Endothelial cell of umbilical vein (primary cell): ENCODE measurements at regions of chr2 and their contacts with region 1.

Region 1: DNA sequence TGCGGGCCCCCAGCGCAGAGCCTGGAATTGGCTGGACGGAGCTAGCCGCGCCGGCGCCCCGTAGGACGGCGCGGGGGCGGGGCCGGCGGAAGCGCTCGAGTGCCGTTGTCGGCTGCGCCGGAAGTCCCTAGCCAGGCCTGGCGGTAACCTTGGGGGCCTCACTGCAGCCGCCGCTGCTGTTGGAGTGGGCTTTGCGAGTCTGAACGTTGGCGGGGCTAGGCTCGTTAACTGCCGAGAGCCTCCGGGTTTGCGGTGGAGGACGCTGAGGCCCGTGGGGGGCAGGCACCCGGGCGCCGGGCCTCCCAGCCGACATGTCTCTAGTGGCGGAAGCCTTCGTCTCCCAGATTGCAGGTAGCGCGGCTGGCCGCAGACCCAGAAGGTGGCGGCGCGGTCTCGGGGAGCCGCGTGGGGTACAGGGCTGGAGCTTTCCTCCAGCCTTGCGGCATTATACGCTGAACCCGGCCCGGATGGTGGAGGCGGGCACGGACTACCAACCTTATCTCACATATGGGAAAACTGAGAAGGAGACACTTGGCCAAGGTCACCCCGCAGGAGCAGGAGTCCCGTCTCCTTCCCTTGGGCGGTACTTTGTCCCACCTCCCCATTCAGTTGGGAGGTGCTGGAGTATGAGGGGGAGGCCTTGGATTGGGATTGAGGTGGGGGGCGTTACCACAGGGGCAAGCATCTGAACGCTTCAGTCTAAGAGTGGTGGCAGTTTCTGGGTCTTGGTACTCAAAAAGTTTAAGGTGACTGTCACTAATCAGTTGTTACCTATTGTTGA is at the start of gene MTX2:
- DNase-seq: peak; percentile 78
- H3K4me3 ChIP-seq: peak within 1 kb of the TSS; percentile 73 to 87 (median 77)
- H3K27ac ChIP-seq: peak within 1 kb of the TSS; percentile 77
- H3K4me1 ChIP-seq: peaks cover 8% of the 10 kb centered on the region
- H3K27me3 ChIP-seq: no peaks in the 10 kb centered on the region
- CTCF ChIP-seq: peak in 1 of 2 donors; percentile 10
- POLR2A ChIP-seq: peak; percentile 88
- total RNA-seq, gene MTX2: 31.3 and 31.7 TPM in 2 replicates

Region 2: DNA sequence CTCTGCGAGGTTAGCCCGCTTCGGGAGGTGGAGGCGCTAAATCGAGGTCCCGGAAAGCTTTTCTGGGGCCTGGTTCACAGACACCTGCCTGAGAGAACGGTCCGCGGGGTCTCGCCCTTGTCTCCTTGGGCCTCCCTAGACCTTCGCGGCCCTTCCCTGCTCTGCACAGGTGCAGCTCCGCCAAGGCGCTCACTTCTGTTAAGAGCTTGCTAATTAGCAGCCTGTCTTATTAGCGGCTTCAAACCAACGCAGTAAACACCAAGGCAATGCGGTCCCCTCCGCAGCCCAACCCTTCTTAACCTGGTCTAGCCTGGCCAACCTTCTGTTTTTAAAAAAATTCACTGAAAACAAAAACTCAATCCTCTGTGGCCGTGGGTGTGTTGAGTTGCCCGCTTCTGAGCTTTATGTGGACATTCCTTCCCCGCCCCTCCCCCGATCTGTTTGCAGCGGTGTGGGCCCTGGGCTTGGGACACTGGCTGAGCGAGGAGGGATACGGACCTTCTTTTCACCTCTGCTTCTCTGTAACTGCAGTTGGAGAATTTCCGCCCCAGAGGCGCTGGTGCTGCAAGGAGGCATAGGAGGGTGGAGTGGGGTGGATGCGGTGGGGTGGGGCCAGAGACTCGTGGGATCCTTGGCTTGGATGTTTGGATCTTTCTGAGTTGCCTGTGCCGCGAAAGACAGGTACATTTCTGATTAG is 121.6 kb before region 1 on chr2:
- CTCF ChIA-PET with region 1: no interaction called
- POLR2A ChIA-PET with region 1: no interaction called
- dilution Hi-C with region 1: no loop called
- intact Hi-C with region 1: no loop called
- DNase-seq: no peak
- H3K4me3 ChIP-seq: no peak overlapping the region
- H3K27ac ChIP-seq: no peak overlapping the region
- H3K4me1 ChIP-seq: no peaks in the 10 kb centered on the region
- H3K27me3 ChIP-seq: no peaks in the 10 kb centered on the region
- CTCF ChIP-seq: no peak
- POLR2A ChIP-seq: no peak

Region 3: DNA sequence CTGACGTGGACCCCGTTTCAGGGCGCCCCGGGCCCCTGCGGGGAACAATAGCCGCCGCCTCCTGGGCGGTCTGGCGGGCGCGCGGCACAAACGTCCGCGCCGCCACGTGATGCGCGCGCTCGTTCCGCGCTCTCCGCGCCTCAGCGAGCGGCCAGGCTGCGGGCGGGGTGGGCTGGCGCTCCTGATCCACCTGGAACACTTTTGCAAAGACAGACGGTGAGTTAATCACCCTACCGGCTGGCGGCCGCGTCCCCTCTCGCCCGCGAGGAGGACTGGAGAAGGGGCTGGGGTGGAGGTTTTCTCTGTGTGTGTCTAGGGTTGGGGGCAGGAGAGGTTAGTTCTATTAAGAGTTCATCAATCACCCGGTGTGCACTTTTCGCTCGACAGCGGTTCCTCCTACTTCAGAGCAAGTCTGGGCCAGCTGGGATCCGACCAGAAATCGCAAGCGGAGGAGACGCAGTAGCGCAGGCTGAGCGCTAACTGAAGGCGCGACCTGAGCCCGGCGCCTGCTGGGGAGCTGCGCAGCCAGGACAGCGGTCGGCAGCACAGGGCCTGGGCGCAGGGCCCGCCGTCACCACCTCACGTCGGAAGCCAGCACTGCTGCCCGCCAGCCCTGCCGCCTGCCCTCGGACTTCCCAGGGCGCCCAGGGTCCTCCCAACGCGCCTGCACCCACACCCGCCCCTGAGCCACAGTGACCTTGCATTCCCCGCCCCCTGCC is 91.3 kb before region 1 on chr2:
- CTCF ChIA-PET with region 1: no interaction called
- POLR2A ChIA-PET with region 1: no interaction called
- dilution Hi-C with region 1: no loop called
- intact Hi-C with region 1: loop called (anchors 1 kb)
- DNase-seq: peak; percentile 68
- H3K4me3 ChIP-seq: peak overlapping the region; percentile 33 to 49 (median 48)
- H3K27ac ChIP-seq: peak overlapping the region; percentile 77
- H3K4me1 ChIP-seq: peaks cover 30% of the 10 kb centered on the region
- H3K27me3 ChIP-seq: no peaks in the 10 kb centered on the region
- CTCF ChIP-seq: no peak
- POLR2A ChIP-seq: no peak

Region 4: GRCh38 chr2:176643646-176644045 is 374.1 kb after region 1 on chr2:
- CTCF ChIA-PET with region 1: no interaction called
- POLR2A ChIA-PET with region 1: interaction called, 13 read pairs
- dilution Hi-C with region 1: no loop called
- intact Hi-C with region 1: no loop called
- DNase-seq: peak; percentile 39
- H3K4me3 ChIP-seq: no peak overlapping the region
- H3K27ac ChIP-seq: no peak overlapping the region
- H3K4me1 ChIP-seq: peaks cover 10% of the 10 kb centered on the region
- H3K27me3 ChIP-seq: no peaks in the 10 kb centered on the region
- CTCF ChIP-seq: no peak
- POLR2A ChIP-seq: no peak